GM23248 (cell line): ENCODE measurements at regions of chr17 and their contacts with region 1.

Region 1: DNA sequence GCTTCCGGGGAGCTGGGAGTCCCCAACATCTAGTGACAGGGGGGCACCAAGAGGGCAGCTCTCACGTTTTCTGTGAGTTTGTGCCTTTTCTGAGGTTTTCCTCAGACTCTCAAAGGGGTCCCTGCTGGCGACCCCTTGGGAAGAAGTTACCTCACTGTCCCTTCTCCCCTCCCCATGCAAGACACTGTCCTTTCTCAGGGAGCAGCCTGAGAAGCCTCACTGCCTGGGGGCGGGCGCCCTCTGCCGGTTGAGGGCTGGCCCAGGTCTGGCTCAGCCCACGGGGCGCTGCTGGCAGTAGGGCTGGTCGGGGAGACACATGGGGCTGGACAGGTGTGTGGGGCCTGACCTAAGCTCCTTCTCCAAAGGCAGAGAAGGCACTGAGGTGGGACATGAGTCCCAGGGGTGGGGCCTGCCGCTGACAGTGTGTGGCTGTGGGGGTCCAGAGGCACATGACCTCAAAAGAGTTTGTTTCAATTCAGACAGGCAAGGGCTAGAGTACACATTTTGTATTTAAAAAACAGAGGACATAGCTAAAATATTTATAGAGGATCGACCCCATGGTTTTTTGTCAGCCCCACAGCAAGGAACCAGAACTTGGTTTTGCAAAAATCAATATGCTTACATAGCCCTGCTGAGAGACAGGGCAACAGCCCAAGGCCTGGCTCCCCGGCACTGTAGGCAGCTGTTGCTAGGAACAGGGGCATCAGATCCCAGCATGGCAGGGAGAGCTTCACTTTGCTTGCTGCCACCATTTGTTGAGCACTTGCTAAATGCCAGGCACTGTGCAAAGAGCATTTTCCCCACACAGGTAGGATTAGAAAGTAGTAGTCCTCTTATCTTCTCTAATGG is 18.5 kb upstream of the ALDH3A1 start:
- DNase-seq: peak; percentile 75
- H3K4me3 ChIP-seq: no peak overlapping the region
- H3K27ac ChIP-seq: no peak overlapping the region
- H3K4me1 ChIP-seq: peaks cover 15% of the 10 kb centered on the region
- H3K27me3 ChIP-seq: no peaks in the 10 kb centered on the region

Region 2: GRCh38 chr17:19270689-19271611 is 495.7 kb before region 1 on chr17:
- in situ Hi-C with region 1: loop called (anchors 25 kb)
- DNase-seq: no peak
- H3K4me3 ChIP-seq: no peak overlapping the region
- H3K27ac ChIP-seq: no peak overlapping the region
- H3K4me1 ChIP-seq: no peaks in the 10 kb centered on the region; the same call in 1 of the 2 replicates
- H3K27me3 ChIP-seq: no peaks in the 10 kb centered on the region

Region 3: DNA sequence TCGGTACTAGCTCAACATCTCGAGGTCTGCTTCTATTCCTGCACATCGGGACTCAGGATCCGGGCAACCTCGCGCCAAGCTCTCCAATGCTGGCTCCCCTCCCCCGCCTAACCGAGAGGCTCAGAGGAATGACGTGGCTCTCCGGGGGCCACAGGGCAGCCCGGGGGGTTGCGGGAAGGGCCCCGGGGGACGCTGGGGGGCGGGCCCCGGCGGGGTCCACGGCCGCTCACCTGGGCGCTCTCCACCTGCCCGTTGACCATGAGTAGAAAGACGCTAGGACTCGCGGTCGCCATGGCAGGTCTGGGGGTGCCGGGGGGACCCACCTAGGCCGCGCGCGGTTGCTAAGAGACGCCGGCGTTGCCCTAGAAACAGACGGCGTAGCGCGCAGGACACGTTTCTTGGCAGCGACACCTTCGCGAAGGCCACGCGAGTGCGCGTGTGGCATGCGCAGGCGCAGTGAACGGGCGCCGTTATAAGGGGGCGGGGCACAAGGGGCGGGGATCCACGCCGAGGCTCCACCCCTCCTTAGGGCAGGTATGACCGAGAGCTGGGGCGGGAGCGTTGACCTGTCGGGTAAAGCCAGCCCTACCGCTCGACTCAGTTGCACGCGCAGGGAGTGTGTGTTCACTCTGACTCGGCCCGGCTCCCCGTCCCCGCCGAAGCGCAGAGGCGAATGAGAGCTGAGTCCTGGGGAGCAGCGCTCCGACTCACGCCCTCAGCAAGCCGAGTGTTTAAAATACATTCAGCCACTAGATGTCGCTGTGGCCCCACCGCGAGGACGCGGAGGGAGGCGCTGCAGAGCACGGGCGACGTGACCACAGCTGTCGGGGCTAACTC is 404.2 kb before region 1 on chr17 and contains the start of gene B9D1:
- in situ Hi-C with region 1: loop called (anchors 10 kb)
- DNase-seq: peak; percentile 97
- H3K4me3 ChIP-seq: peak within 1 kb of the TSS; percentile 76
- H3K27ac ChIP-seq: peak within 1 kb of the TSS; percentile 71
- H3K4me1 ChIP-seq: peaks cover 7% of the 10 kb centered on the region; the same call in 1 of the 2 replicates
- H3K27me3 ChIP-seq: no peaks in the 10 kb centered on the region
- total RNA-seq, gene B9D1: 14.9 and 15.5 TPM in 2 replicates

Region 4: GRCh38 chr17:19513897-19514488 is 252.7 kb before region 1 on chr17:
- in situ Hi-C with region 1: loop called (anchors 5 kb)
- DNase-seq: peak; percentile 81
- H3K4me3 ChIP-seq: 0 out of 2 replicates have a peak overlapping the region, but pooled peaks have one; percentile 22
- H3K27ac ChIP-seq: no peak overlapping the region
- H3K4me1 ChIP-seq: no peaks in the 10 kb centered on the region
- H3K27me3 ChIP-seq: no peaks in the 10 kb centered on the region

Region 5: GRCh38 chr17:19805006-19805405 is 38.4 kb after region 1 on chr17:
- in situ Hi-C with region 1: no loop called
- DNase-seq: peak; percentile 11
- H3K4me3 ChIP-seq: no peak overlapping the region
- H3K27ac ChIP-seq: no peak overlapping the region
- H3K4me1 ChIP-seq: no peaks in the 10 kb centered on the region
- H3K27me3 ChIP-seq: no peaks in the 10 kb centered on the region

Region 6: DNA sequence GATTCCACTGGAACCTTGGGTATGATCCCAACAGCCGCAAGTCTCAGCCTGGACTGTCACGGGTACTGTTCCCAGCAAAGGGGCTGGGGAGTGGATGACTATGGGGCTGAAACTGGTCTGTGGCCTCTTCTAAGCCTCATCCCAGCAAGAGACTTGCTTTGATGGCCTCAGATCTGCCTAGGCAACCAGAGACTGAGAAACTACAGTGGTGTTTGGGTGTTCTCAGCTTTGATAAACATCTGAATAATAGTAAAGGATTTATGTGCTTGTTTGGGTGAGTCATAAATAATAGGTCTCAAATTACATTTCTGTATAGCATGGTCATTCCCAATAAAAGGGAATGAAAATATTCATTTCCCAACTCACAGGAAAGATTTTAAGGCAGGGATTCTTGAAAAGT is 131.3 kb after region 1 on chr17:
- in situ Hi-C with region 1: no loop called
- DNase-seq: peak; percentile 77
- H3K4me3 ChIP-seq: no peak overlapping the region
- H3K27ac ChIP-seq: peak overlapping the region; percentile 69
- H3K4me1 ChIP-seq: peaks cover 17% of the 10 kb centered on the region
- H3K27me3 ChIP-seq: no peaks in the 10 kb centered on the region

Region 7: DNA sequence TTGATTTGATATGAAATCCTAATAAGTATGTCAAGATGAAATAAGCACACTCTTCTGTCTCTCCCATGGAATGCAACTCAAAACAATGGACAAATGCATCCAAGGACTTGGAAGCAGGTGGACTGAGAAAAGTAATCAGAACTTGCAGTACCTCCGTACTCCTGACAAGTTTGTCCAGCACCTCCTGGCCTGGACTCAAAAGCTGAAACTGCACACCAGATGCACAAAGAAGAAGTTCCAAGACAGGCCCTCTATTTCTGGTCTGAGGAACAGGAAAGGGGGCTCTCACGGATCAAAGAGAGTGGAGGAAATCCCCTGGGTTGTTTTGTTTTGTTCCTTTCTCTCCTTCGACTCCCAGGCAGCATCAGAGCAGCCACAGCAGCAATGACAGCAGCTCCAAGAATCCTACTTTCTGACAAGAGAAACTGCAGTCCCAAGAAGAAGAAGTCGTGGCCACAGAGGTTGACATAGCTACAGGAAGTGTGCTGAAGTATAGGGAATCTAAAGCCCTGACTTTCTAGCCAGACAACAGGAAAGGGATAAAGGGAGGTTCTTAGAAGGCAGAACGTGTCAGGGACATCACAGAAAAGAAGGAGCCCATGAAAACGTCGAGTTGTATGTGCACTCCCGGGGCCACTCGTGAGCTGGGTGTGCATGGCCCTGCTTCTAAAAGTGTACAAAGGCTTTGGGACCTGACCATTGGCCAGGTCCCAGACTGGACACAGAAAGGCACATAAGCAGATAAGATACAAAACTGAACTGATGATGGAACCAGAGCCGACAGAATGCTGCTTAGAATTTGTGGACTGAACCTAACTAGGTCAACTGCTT is 181.7 kb after region 1 on chr17:
- in situ Hi-C with region 1: no loop called
- DNase-seq: no peak
- H3K4me3 ChIP-seq: no peak overlapping the region
- H3K27ac ChIP-seq: no peak overlapping the region
- H3K4me1 ChIP-seq: no peaks in the 10 kb centered on the region
- H3K27me3 ChIP-seq: no peaks in the 10 kb centered on the region